ENCODE measurements at regions of chr15 and their contacts with region 1.

Region 1: DNA sequence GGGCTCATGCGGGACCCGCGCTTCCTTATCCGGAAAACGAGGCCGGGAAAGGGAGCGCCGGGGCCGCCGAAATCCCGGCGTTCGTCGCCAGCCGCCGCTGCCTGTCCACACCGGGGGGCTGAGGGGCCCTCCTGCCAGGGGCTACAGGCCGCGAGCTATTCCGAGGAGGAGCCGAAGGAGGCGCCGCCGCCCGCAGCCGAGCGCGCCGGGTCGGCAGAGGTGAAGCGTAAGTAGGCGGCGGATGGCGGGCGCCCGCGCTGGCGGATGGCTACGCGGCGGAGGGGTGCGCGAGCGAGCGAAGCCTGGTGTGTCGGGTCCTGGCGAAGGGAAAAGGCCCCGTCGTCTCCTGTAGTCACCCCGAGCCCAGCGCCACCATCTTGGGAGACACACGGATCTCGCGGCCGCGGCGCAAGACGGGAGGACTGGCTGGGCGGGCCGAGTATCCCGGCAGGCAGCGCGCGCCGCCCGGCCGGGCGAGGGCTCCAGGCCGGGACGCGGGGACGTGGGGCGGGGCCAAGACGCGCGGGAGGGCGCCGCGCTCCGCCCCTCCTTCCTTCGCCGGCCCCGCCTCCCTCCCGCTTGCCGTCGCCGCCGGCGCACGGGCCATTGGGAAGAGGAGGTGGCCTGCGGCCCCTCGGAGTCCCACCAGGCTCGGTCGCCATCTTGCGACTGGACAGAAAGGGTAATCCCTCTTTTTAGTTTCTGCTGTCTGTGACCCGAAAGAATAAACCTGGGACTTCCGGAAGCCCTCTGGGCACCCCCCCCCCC is at the start of gene UBE3A:
- DNase-seq: peak; percentile 97
- H3K4me3 Mint-ChIP-seq: peak within 1 kb of the TSS; percentile 97
- H3K27ac Mint-ChIP-seq: peak within 1 kb of the TSS; percentile 95
- H3K4me1 Mint-ChIP-seq: peaks cover 28% of the 10 kb centered on the region
- H3K27me3 Mint-ChIP-seq: no peaks in the 10 kb centered on the region
- total RNA-seq, gene UBE3A: 110 and 116 TPM in 2 replicates

Region 2: DNA sequence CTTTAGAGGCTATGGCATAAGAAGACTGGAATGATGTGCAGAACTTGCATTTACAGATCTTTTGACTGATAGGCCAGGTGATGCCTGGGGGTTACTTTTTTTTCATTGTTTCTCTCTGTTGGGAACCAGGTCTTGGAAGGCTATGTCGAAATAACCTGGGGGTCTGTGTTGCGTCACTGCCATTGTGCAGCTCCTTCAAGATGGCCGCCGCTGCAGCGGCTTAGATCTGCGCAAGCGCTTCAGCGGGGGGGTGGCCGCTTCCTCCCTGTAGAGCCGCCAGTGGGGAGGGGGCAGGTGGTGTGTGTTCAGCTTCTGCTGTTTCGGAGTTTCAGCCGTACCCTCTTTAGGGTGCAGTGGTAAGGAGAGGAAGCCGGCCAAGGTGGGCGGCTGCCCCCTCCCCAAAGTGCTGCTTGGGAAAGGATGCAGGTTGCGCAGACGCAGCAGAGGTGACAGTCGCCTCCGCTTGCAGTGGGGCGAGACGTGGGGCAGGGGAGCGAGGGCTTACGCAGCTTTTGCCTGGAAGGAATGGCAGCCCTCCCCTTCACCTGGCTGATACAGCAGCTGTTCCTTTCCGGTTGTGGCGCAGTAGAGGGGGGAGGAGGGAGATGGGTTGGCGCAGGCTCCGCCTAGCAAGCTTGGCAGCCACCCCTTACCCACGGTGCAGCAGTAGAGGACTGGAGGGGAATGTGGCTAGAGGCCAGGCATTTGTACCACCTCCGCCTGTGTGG is 482.5 kb before region 1 on chr15:
- intact Hi-C with region 1: loop called (anchors 2 kb)
- DNase-seq: peak; percentile 91
- H3K4me3 Mint-ChIP-seq: peak overlapping the region; percentile 96
- H3K27ac Mint-ChIP-seq: peak overlapping the region; percentile 94
- H3K4me1 Mint-ChIP-seq: peaks cover 11% of the 10 kb centered on the region
- H3K27me3 Mint-ChIP-seq: peaks cover 2% of the 10 kb centered on the region

Region 3: GRCh38 chr15:25366058-25366457 is 72.7 kb before region 1 on chr15:
- intact Hi-C with region 1: loop called (anchors 2 kb)
- DNase-seq: no peak
- H3K4me3 Mint-ChIP-seq: no peak overlapping the region
- H3K27ac Mint-ChIP-seq: no peak overlapping the region
- H3K4me1 Mint-ChIP-seq: peaks cover 11% of the 10 kb centered on the region
- H3K27me3 Mint-ChIP-seq: no peaks in the 10 kb centered on the region

Region 4: DNA sequence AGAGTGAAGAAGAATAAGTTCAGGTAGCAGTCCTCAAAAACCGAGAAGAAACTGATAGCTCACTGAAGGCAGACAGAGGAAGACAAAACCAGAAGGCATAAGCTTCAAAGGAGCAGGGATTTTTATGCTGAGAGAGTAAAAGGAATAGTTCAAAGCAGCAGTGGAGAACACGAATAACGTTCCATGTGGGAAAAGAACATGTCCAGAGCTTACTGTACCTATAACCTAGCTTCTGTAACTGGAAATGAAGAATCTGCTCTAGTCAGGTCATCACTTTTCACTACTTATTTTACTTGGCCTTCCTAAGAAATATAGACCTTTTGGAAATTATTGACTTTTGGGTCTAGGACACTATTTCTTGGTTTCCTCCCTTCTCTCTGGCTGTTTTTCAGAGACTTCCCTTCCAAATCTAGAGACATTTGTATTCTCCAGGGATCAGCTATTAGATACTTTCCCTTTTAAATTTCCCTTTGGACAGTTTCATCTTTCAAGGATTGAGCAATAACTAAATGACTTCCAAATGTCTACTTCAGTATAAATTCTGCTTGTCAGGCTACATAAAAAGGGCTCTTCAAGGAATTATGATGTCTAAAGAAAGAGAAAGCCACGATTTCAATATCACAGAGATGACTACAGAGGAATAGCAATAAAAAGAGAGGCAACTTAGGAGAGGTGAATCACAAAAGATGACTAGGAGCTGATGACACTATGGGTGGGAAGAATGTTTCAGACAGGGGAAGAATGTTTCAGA is 46.6 kb before region 1 on chr15:
- intact Hi-C with region 1: loop called (anchors 5 kb)
- DNase-seq: no peak
- H3K4me3 Mint-ChIP-seq: no peak overlapping the region
- H3K27ac Mint-ChIP-seq: no peak overlapping the region
- H3K4me1 Mint-ChIP-seq: peaks cover 7% of the 10 kb centered on the region
- H3K27me3 Mint-ChIP-seq: no peaks in the 10 kb centered on the region

Region 5: GRCh38 chr15:25850154-25851111 is 411.6 kb after region 1 on chr15:
- intact Hi-C with region 1: loop called (anchors 2 kb)
- DNase-seq: peak; percentile 90
- H3K4me3 Mint-ChIP-seq: peak overlapping the region; percentile 84
- H3K27ac Mint-ChIP-seq: peak overlapping the region; percentile 99
- H3K4me1 Mint-ChIP-seq: peaks cover 76% of the 10 kb centered on the region
- H3K27me3 Mint-ChIP-seq: no peaks in the 10 kb centered on the region

Region 6: GRCh38 chr15:26082221-26083109 is 643.7 kb after region 1 on chr15:
- intact Hi-C with region 1: loop called (anchors 5 kb)
- DNase-seq: peak; percentile 98
- H3K4me3 Mint-ChIP-seq: peak overlapping the region; percentile 86
- H3K27ac Mint-ChIP-seq: peak overlapping the region; percentile 89
- H3K4me1 Mint-ChIP-seq: peaks cover 18% of the 10 kb centered on the region
- H3K27me3 Mint-ChIP-seq: peaks cover 11% of the 10 kb centered on the region

Measured in activated CD4-positive, alpha-beta T cell treated with anti-CD3 and anti-CD28 coated beads, Interleukin-2, amount 10 ng/mL, durations not matched to agents 24 days and 14 days (primary cell).